Left cardiac atrium (tissue), 4 donors: ENCODE measurements at regions of chr3 and their contacts with region 1.

Region 1: DNA sequence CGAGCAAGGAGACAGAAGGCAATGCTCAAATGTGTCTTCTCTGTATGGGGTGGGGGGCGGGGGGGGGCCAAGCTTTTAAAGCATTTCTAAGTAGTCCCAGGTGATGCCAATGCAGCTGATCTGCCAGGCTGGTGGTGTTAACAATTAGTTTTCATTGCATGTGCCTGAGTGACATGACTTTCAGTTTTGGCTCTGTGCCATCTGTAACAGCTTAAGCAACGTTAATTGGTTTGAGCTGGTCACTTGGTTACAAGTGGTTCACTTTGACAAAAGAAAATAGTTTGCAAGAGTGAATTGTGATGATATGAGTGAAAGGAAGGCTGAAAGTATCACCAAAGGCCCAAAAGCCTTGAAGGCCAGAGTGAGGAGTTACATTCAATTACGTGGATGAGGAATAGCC is 26.4 kb upstream of the LRIG1 start:
- DNase-seq: no peak
- ATAC-seq: no peak

Region 2: GRCh38 chr3:66593964-66594363 is 66.7 kb after region 1 on chr3:
- intact Hi-C with region 1: loop called in 1 of 2 experiments (anchors 10 kb)
- DNase-seq: no peak
- ATAC-seq: no peak

Region 3: DNA sequence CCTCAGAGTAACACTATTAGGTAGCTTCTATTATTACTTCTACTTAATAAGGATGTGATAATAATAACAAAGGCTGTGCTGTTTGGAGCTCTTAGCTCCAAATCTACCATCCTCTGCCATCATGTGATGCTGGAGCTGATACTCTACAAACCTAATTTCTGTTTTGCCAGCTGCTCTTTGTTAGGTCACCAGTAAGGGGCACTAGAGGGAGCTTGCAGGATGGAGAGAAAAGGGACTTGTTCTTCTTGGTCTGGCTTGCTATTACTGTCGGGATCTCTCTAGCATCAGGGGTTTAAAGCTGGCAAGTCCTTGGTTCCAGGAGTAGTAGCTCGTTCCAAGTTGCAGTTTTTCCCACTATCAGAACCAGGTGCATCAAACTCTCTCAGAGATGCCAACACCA is 276.0 kb after region 1 on chr3:
- intact Hi-C with region 1: loop called in 1 of 2 experiments (anchors 10 kb)
- DNase-seq: no peak
- ATAC-seq: no peak